Tibial artery (tissue), 4 donors: ENCODE measurements at regions of chr5 and their contacts with region 1.

Region 1: GRCh38 chr5:154811653-154812365 is 38.6 kb downstream of the FAXDC2 start:
- DNase-seq: peak; percentile 62 to 78
- H3K4me3 ChIP-seq: no peak overlapping the region
- H3K27ac ChIP-seq: no peak overlapping the region
- H3K4me1 ChIP-seq: peaks cover 0 to 3% (median 0%) of the 10 kb centered on the region in 4 donors
- H3K27me3 ChIP-seq: no peaks in the 10 kb centered on the region
- CTCF ChIP-seq: peak; percentile 78 to 90

Region 2: DNA sequence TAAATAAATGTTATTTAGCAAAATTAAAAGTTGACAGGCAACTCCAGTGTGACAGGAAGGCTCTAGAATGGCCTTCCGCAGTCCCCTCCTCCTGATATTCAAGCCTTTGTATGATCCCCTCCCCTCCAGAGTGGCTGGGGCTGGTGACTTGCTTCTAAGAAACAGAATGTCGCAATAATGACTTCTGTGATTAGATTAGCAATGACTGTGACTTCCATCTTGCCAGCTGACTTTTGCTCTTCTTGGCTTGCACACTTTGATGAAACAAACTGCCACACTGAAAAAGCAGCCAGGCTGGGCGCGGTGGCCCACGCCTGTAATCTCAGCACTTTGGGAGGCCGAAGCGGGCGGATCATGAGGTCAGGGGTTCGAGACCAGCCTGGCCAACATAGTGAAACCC is 163.1 kb before region 1 on chr5:
- intact Hi-C with region 1: loop called (anchors 2 kb)
- DNase-seq: no peak
- H3K4me3 ChIP-seq: no peak overlapping the region
- H3K27ac ChIP-seq: no peak overlapping the region
- H3K4me1 ChIP-seq: peaks cover 0 to 13% (median 7%) of the 10 kb centered on the region in 4 donors
- H3K27me3 ChIP-seq: peaks cover 0 to 4% of the 10 kb centered on the region in 2 donors
- CTCF ChIP-seq: no peak